ENCODE measurements at regions of chr1 and their contacts with region 1.

Region 1: DNA sequence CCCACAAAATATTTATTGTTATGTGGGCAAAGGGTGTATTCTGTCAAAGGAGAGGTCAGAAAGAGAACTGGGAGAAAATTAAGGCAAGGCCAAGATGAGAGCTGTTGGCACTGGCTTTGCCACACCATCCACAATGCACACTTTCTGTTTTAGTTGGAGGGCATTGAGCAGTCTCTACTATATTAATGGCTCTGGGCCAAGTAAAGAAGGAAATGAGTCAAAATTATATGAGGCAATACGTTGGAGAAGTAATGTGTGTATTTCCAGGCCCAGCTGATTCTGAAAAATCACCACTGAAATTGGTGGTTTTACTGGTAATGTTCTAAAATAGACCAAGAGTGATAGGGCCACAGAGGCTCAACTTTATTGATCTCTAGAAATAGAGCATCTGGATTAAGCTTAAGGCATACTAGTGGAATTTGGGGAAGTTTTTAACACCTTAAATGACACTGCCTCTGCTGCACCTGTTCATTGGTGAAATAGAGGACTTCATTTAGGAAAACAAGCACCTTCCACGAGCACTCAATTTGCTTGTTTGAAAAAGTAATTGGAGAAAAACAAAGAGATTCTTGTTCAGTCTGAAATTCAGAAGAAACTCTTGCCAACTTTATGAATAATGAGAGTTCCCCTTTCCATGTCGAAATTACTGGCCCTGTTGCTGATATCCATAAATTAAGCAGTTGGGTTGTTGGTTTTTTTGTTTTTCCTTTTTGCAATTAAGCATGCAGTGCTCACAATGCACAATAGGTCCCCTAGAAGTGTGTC is 424.9 kb downstream of the ADGRL2 start:
- DNase-seq: no peak
- ATAC-seq: peak in 7 of 8 donors; percentile 52 to 81 (median 58)
- H3K4me3 ChIP-seq: no peak overlapping the region
- H3K27ac ChIP-seq: peak overlapping the region in 3 of 10 donors; percentile 15 to 80 (median 40)
- H3K4me1 ChIP-seq: peaks cover 0 to 36% (median 27%) of the 10 kb centered on the region in 9 donors
- H3K27me3 ChIP-seq: no peaks in the 10 kb centered on the region
- CTCF ChIP-seq: no peak

Region 2: DNA sequence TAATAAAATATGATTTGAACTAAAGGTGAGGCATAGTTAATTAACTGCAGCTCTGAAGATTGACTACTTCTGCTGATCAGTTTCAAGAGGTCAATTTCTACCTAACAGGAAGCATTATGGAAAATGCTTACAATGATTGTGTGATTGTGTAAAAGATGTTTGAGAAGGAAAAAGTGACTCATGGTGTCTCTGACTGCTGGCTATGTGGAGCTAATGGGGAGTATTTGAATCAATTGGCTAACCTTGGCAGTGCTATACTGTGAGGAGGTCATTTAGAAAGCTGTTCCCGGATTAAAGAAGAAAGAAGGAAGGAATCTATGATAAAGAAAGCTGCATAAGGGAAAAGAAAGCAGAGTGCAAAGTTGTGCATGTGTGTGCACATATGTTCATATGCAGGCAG is 48.4 kb before region 1 on chr1:
- intact Hi-C with region 1: loop called in 1 of 10 experiments (anchors 10 kb)
- DNase-seq: no peak
- ATAC-seq: no peak
- H3K4me3 ChIP-seq: no peak overlapping the region
- H3K27ac ChIP-seq: no peak overlapping the region
- H3K4me1 ChIP-seq: no peaks in the 10 kb centered on the region
- H3K27me3 ChIP-seq: no peaks in the 10 kb centered on the region
- CTCF ChIP-seq: no peak

Region 3: DNA sequence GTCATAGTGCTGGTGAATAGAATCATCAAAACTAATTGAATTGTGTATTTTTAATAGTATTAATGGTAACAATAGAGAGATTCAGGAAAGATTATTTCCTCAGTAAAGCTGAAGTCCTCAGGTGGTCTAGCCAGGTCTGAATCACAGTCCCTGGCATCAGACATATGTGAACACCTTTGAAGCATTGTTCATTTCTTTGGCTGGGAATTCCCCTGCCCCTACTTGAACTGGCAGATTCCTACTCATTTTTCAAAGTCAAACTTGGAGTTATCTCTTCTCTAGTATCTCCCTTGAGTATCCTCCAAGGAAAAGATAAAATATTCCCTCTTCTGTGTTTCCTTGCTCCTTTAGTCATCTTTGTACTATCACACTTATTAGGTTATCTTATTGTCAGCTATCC is 335.0 kb after region 1 on chr1:
- intact Hi-C with region 1: no loop called
- DNase-seq: no peak
- ATAC-seq: no peak
- H3K4me3 ChIP-seq: no peak overlapping the region
- H3K27ac ChIP-seq: no peak overlapping the region
- H3K4me1 ChIP-seq: peaks cover 0 to 14% (median 10%) of the 10 kb centered on the region in 9 donors
- H3K27me3 ChIP-seq: no peaks in the 10 kb centered on the region
- CTCF ChIP-seq: no peak